ENCODE measurements at regions of chr3 and their contacts with region 1.

Region 1: GRCh38 chr3:120795017-120795648 is 52.6 kb downstream of the GTF2E1 start:
- DNase-seq: peak; percentile 90
- H3K4me3 Mint-ChIP-seq: no peak overlapping the region
- H3K27ac Mint-ChIP-seq: no peak overlapping the region
- H3K4me1 Mint-ChIP-seq: no peaks in the 10 kb centered on the region
- H3K27me3 Mint-ChIP-seq: no peaks in the 10 kb centered on the region

Region 2: GRCh38 chr3:120558771-120559241 is 236.3 kb before region 1 on chr3:
- CTCF ChIA-PET with region 1: interaction called, 56 read pairs
- DNase-seq: peak; percentile 91
- H3K4me3 Mint-ChIP-seq: peak overlapping the region; percentile 65
- H3K27ac Mint-ChIP-seq: no peak overlapping the region
- H3K4me1 Mint-ChIP-seq: peaks cover 17% of the 10 kb centered on the region
- H3K27me3 Mint-ChIP-seq: peaks cover 12% of the 10 kb centered on the region

Region 3: DNA sequence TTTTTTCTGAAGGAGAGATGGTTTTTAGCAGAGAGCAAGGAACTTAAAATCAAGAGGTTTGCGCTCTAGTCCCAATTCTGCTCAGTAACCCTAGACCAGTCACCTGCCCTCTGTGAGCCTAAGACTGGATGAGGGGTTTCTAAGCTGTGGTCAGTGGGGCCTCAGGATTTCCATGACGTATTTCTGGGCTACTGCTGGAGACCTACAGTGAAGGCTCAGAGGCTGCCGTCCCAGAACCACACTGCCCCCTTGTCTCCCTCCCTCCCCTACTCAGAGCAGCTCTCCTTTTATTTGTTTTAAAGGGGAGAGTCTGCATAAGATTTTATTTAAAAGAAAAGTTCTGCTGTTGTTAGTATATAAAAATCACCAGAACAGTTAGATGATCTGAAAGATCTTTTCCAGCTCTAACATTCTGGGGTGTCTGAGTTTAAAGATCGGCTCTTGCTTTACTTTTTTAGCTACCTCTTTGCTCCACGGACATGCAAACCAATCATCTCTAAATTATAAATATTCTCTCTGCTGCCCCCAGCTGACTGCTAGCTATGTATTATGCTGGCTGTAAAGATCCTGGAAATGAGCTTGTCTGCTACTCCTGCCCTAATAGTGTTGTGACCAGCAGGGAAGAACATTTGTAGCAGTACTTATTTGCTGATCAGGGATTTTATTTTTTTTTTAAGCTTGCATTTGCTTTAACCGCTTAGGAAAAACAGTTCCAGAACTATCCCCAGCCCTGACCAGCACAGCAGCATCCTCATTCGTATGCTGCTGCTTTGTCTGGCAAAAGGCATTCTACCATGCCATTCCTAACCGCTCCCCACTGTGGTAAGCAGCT is 227.5 kb before region 1 on chr3:
- CTCF ChIA-PET with region 1: interaction called, 45 read pairs
- DNase-seq: no peak
- H3K4me3 Mint-ChIP-seq: no peak overlapping the region
- H3K27ac Mint-ChIP-seq: no peak overlapping the region
- H3K4me1 Mint-ChIP-seq: no peaks in the 10 kb centered on the region
- H3K27me3 Mint-ChIP-seq: peaks cover 4% of the 10 kb centered on the region

Region 4: GRCh38 chr3:120772081-120772480 is 23.1 kb before region 1 on chr3:
- CTCF ChIA-PET with region 1: interaction called, 10 read pairs
- DNase-seq: no peak
- H3K4me3 Mint-ChIP-seq: no peak overlapping the region
- H3K27ac Mint-ChIP-seq: no peak overlapping the region
- H3K4me1 Mint-ChIP-seq: peaks cover 7% of the 10 kb centered on the region
- H3K27me3 Mint-ChIP-seq: no peaks in the 10 kb centered on the region

Region 5: DNA sequence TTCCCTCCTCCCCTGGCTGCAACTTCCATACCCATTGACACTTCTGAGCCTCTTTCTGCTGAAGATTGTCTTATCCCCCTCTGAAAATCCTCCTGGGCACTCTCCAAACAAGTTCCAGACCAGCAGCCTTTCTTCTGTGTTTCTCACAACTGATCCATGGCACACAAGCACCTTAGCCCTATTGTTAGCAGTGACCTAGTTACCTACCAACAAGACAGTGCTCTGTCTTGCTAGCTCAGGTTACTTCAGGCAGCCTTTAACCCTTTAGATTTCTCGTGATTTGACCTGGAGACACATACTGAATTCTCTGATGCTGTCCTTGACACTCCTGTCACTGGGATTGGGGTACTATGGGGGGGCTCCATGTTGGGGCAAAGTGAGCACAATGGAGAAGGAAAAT is 29.5 kb after region 1 on chr3:
- CTCF ChIA-PET with region 1: no interaction called
- DNase-seq: no peak
- H3K4me3 Mint-ChIP-seq: no peak overlapping the region
- H3K27ac Mint-ChIP-seq: no peak overlapping the region
- H3K4me1 Mint-ChIP-seq: no peaks in the 10 kb centered on the region
- H3K27me3 Mint-ChIP-seq: peaks cover 4% of the 10 kb centered on the region